ENCODE measurements at regions of chr17 and their contacts with region 1.

Region 1: DNA sequence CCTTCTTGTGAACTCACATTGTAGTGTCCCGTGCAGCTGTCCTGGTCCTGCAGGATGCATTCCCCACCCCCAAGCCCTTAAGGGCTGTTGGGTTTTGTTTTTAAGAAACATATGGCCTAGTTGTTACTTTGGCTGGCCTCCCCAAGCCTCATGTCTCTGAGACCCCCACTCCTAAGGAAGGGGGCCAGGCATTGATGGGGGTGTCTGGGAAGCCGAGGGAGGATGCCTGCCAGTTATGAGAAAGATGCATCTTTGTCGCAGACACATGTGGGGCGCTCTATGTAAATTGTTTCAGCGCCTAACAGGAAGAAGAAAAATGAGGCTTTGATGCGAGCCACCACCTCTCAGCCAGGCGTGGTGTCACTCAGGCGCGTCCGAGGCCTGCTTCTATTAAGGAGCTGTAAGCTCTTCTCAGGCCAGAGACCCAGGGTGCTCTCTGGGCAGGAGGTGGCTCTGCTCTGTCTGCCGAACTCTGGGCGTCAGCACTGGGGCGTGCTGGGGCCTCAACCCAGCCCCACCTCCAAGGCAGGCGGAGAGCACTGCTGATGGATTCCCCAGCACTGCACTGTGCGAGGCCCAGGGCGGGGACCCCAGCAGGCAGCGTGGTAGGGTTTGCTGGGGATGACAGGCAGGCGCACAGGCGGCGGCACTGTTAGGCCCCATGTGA is 70.6 kb downstream of the SREBF1 start:
- DNase-seq: no peak

Region 2: GRCh38 chr17:17729620-17730249 is 36.5 kb before region 1 on chr17:
- intact Hi-C with region 1: loop called (anchors 5 kb)
- DNase-seq: no peak